WTC11 (cell line): ENCODE measurements at regions of chr16 and their contacts with region 1.

Region 1: DNA sequence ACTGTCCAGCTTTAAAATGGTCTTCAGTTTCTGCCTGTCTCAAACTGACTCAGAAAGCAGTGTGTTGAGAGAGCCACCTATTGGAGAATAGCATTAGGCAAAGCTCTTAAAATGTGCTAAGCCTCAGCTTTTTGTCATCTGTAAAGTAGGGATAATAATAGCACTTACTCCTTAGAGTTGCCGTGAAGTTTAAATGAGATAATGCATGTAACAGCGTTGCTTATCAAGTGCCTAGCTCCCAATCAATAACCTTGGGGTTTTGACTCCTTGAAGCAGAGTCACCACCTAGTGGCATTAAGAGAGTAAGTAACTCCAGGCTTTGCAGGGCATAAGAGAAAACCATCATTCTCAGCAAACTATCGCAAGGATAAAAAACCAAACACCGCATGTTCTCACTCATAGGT is 163.3 kb downstream of the HS3ST2 start:
- DNase-seq: no peak
- ATAC-seq: peak; percentile 60
- H3K4me3 Mint-ChIP-seq: no peak overlapping the region
- H3K27ac Mint-ChIP-seq: no peak overlapping the region
- H3K4me1 Mint-ChIP-seq: peaks cover 11% of the 10 kb centered on the region
- H3K27me3 Mint-ChIP-seq: no peaks in the 10 kb centered on the region
- CTCF ChIP-seq: no peak

Region 2: GRCh38 chr16:22188595-22189442 is 788.5 kb before region 1 on chr16:
- CTCF ChIA-PET with region 1: no interaction called
- POLR2A ChIA-PET with region 1: no interaction called
- DNase-seq: peak; percentile 69
- ATAC-seq: no peak
- H3K4me3 Mint-ChIP-seq: peak overlapping the region; percentile 88
- H3K27ac Mint-ChIP-seq: no peak overlapping the region
- H3K4me1 Mint-ChIP-seq: peaks cover 33% of the 10 kb centered on the region
- H3K27me3 Mint-ChIP-seq: peaks cover 18% of the 10 kb centered on the region
- CTCF ChIP-seq: peak; percentile 43

Region 3: DNA sequence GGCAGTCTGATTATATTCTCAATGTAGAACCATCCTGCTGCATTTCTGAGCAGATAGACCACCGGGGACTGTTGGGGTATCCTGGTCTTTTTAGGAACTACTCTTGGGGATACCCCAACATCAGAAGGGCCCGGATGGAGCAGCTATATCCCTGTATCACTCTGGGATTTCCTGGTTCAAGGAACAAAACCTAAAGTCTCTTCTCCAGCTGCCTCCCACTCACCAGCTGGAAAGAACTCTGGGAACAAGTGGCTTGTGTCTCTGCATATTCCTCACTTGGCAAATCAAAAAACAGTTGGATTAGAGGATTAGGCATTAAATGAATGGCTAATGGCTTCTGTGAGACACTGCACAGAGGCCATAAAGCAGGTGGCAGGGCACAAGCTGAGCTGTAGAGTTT is 225.6 kb before region 1 on chr16:
- CTCF ChIA-PET with region 1: no interaction called
- POLR2A ChIA-PET with region 1: no interaction called
- DNase-seq: no peak
- ATAC-seq: no peak
- H3K4me3 Mint-ChIP-seq: no peak overlapping the region
- H3K27ac Mint-ChIP-seq: no peak overlapping the region
- H3K4me1 Mint-ChIP-seq: no peaks in the 10 kb centered on the region
- H3K27me3 Mint-ChIP-seq: no peaks in the 10 kb centered on the region; the same call in 1 of the 2 replicates
- CTCF ChIP-seq: no peak

Region 4: DNA sequence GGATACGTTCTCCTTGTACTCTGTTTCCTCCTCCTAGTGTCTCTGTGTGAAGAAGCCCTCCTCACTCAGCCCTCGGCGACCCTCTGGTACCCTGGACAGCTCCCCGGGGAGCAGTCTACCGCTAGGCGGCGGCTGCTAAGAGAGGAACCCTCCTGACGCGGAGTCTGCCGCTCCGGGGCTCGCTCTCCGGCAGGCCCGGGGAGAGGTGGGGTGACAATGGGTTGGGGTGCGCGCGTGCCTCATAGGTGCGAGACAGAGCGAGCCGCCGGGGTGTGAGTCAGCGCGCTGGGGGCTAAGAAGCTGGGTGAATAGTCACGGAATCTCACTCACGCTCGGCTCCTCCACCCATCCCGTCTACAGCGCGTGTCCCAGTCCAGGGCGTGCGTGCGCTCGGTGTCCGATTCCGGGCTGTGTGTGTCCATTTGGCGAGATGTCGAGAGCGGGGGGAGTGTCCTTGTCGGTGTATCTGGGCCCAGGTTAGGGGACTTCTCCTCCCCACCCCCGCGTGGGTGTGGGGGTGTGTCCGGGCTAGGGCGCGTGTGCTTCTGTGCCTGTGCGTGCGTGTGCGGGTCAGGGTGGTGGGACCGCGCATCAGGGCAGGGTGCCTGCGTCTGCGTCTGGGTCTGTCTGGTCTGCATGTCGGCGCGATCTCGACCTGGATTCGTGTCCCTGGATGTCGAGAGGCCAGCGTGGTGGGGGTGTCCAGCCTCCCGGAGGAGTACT is 163.9 kb before region 1 on chr16:
- CTCF ChIA-PET with region 1: interaction called, 11 read pairs
- POLR2A ChIA-PET with region 1: no interaction called
- DNase-seq: peak; percentile 92
- ATAC-seq: peak; percentile 74
- H3K4me3 Mint-ChIP-seq: peak overlapping the region; percentile 82
- H3K27ac Mint-ChIP-seq: no peak overlapping the region
- H3K4me1 Mint-ChIP-seq: peaks cover 9% of the 10 kb centered on the region
- H3K27me3 Mint-ChIP-seq: peaks cover 63% of the 10 kb centered on the region
- CTCF ChIP-seq: peak; percentile 68

Region 5: GRCh38 chr16:22924492-22924891 is 52.8 kb before region 1 on chr16:
- CTCF ChIA-PET with region 1: interaction called, 11 read pairs
- POLR2A ChIA-PET with region 1: no interaction called
- DNase-seq: no peak
- ATAC-seq: no peak
- H3K4me3 Mint-ChIP-seq: no peak overlapping the region
- H3K27ac Mint-ChIP-seq: no peak overlapping the region
- H3K4me1 Mint-ChIP-seq: peaks cover 10% of the 10 kb centered on the region
- H3K27me3 Mint-ChIP-seq: no peaks in the 10 kb centered on the region; the same call in 1 of the 2 replicates
- CTCF ChIP-seq: no peak

Region 6: GRCh38 chr16:22948603-22949368 is 28.5 kb before region 1 on chr16:
- CTCF ChIA-PET with region 1: interaction called, 13 read pairs
- POLR2A ChIA-PET with region 1: no interaction called
- DNase-seq: peak; percentile 88
- ATAC-seq: peak; percentile 85
- H3K4me3 Mint-ChIP-seq: peak overlapping the region; percentile 36
- H3K27ac Mint-ChIP-seq: no peak overlapping the region
- H3K4me1 Mint-ChIP-seq: peaks cover 13% of the 10 kb centered on the region
- H3K27me3 Mint-ChIP-seq: peaks cover 27% of the 10 kb centered on the region
- CTCF ChIP-seq: peak; percentile 71

Region 7: GRCh38 chr16:23060458-23061320 is 83.4 kb after region 1 on chr16:
- CTCF ChIA-PET with region 1: interaction called, 12 read pairs
- POLR2A ChIA-PET with region 1: no interaction called
- DNase-seq: peak; percentile 78
- ATAC-seq: peak; percentile 89
- H3K4me3 Mint-ChIP-seq: no peak overlapping the region
- H3K27ac Mint-ChIP-seq: no peak overlapping the region
- H3K4me1 Mint-ChIP-seq: peaks cover 23% of the 10 kb centered on the region
- H3K27me3 Mint-ChIP-seq: no peaks in the 10 kb centered on the region
- CTCF ChIP-seq: peak; percentile 77